ENCODE measurements at regions of chr2 and their contacts with region 1.

Region 1: DNA sequence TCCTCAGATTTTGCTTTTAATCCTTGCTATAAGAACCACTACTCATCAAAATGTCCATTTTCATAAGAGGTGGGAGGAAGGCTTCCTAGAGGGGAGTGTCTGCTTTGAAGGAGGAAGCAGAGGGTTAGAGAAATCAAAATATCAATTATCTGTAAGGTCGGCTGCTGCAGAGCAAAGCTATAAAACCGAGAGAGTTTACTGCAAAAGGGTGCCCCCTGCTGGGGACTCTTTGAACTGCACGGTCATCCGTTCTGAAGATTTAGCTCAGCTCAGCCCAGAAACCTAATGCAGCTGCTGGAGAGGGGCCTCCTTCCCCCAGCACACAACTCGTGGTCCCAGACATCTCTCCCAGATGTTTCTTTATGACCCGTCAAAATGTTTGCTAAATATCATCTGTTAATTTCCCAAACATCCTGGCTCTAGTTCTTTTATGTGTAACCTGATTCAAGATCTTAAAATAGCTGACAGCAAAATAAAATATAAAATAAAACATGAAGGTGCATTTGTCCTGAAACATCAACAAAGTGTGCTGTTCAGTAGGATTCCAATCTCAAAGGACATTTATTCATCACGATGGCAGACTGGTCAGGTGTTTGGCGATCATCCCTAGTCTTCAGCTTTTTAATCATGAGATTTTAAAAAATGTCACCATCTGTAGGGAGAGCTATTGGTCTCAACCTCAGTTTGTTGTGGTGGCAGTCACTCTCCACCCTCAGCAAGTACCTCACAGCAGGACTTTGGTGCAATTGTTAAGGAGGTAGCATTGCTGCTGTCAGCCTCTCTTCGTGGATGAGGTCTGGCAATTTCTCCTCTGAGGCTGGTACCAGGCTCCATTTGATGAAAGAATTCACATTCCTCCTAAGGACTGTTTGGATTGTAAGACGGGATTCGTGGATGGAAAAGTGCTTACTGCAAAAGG is 185.9 kb downstream of the MTX2 start:
- DNase-seq: peak in 1 of 2 donors; percentile 90
- H3K4me3 ChIP-seq: no peak overlapping the region
- H3K27ac ChIP-seq: no peak overlapping the region
- H3K4me1 ChIP-seq: no peaks in the 10 kb centered on the region
- H3K27me3 ChIP-seq: no peaks in the 10 kb centered on the region
- CTCF ChIP-seq: peak; percentile 59 to 91 (median 83)

Region 2: DNA sequence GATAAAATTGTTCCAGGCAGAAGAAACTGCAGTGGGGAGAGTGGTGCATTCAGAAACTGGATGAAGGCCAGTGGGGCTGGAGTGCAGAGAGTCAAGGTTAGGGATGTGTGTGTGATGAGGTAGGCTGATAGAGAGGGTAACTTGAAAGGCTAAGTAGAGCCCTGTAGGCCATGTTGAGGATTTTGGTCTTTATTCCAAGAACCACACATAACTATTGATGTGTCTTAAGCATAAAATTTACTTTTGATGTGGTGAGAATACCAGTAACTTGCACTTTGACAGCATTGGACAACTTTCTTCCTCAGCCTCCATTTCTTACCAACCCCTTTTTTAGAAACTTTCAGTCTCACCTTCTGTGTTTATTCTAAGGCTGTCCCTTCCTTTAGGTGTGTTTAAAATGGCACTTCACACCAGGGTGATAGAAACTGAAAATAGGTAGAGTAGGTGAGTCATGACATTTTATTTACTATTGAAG is 163.3 kb before region 1 on chr2:
- intact Hi-C with region 1: loop called (anchors 10 kb)
- DNase-seq: no peak
- H3K4me3 ChIP-seq: no peak overlapping the region
- H3K27ac ChIP-seq: no peak overlapping the region
- H3K4me1 ChIP-seq: no peaks in the 10 kb centered on the region
- H3K27me3 ChIP-seq: no peaks in the 10 kb centered on the region
- CTCF ChIP-seq: no peak

Region 3: GRCh38 chr2:176554101-176555048 is 99.2 kb after region 1 on chr2:
- intact Hi-C with region 1: loop called (anchors 2 kb)
- DNase-seq: peak in 1 of 2 donors; percentile 65
- H3K4me3 ChIP-seq: peak overlapping the region; percentile 52 to 59
- H3K27ac ChIP-seq: peak overlapping the region; percentile 64 to 66
- H3K4me1 ChIP-seq: peaks cover 7 to 11% of the 10 kb centered on the region in 2 donors
- H3K27me3 ChIP-seq: no peaks in the 10 kb centered on the region
- CTCF ChIP-seq: peak; percentile 71 to 85 (median 81)

Region 4: DNA sequence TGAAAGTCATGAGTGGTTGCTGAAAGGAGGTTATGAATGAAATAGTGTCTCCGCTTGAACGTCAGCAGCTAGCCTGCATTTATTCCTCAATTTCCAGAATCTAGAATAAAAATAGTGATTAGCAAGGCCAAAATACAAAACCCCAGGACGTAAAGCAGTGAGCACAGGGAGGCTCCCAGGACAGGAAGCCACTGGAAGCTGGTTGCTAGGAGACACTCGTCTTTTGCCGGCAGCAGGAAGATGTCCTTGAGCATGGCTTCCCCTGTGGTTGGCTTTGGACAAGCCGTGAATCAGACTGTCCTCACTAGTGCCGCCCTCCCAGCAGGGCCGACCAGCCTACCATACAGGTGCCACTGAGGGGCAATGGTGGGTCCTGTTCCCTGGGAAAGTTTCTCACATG is 188.5 kb after region 1 on chr2:
- intact Hi-C with region 1: loop called (anchors 5 kb)
- DNase-seq: no peak
- H3K4me3 ChIP-seq: no peak overlapping the region
- H3K27ac ChIP-seq: no peak overlapping the region
- H3K4me1 ChIP-seq: no peaks in the 10 kb centered on the region
- H3K27me3 ChIP-seq: no peaks in the 10 kb centered on the region
- CTCF ChIP-seq: no peak

Region 5: DNA sequence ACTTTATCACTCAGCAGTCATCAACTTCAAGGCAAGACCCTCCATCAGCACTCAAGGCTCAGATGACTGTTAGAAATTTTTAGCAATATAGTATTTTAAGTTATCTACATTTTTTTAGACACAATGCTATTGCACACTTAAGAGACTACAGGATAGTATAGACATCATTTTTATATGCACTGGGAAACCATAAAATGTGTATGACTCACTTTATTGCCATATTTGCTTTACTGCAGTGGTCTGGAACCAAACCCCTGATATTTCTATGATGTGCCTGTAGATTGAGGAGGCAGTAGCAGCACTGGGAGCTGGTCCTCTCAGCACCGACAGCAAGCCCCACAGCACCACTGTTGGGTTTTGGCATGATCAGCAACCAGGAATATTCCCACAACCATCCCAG is 492.6 kb after region 1 on chr2:
- intact Hi-C with region 1: no loop called
- DNase-seq: no peak
- H3K4me3 ChIP-seq: no peak overlapping the region
- H3K27ac ChIP-seq: no peak overlapping the region
- H3K4me1 ChIP-seq: no peaks in the 10 kb centered on the region
- H3K27me3 ChIP-seq: no peaks in the 10 kb centered on the region
- CTCF ChIP-seq: no peak